A549 (cell line): ENCODE measurements at regions of chr7 and their contacts with region 1.

Region 1: GRCh38 chr7:100719523-100720319 is 547 bp upstream of the EPO start:
- DNase-seq: peak in 1 of 2 experiments; percentile 64
- ATAC-seq: peak; percentile 68 to 80
- H3K4me3 ChIP-seq: peak overlapping the region; percentile 40
- H3K27ac ChIP-seq: peak overlapping the region in 1 of 2 experiments; percentile 70; a peak in 1 of 6 replicates
- H3K4me1 ChIP-seq: peaks cover 11% of the 10 kb centered on the region; the same call in 2 of the 3 replicates
- CTCF ChIP-seq: peak; percentile 55
- EP300 ChIP-seq: no peak
- POLR2A ChIP-seq: no peak
- RAD21 ChIP-seq: peak; percentile 77 to 80

Region 2: GRCh38 chr7:100503345-100503725 is 216.4 kb before region 1 on chr7:
- CTCF ChIA-PET with region 1: no interaction called
- POLR2A ChIA-PET with region 1: no interaction called
- DNase-seq: peak in 1 of 2 experiments; percentile 61
- ATAC-seq: peak; percentile 67 to 82; a peak in 5 of 6 replicates
- H3K4me3 ChIP-seq: no peak overlapping the region
- H3K27ac ChIP-seq: peak overlapping the region; percentile 74 to 78
- H3K4me1 ChIP-seq: peaks cover 24% of the 10 kb centered on the region
- CTCF ChIP-seq: no peak
- EP300 ChIP-seq: peak in 1 of 2 experiments; percentile 10; a peak in 1 of 5 replicates
- POLR2A ChIP-seq: no peak
- RAD21 ChIP-seq: no peak

Region 3: DNA sequence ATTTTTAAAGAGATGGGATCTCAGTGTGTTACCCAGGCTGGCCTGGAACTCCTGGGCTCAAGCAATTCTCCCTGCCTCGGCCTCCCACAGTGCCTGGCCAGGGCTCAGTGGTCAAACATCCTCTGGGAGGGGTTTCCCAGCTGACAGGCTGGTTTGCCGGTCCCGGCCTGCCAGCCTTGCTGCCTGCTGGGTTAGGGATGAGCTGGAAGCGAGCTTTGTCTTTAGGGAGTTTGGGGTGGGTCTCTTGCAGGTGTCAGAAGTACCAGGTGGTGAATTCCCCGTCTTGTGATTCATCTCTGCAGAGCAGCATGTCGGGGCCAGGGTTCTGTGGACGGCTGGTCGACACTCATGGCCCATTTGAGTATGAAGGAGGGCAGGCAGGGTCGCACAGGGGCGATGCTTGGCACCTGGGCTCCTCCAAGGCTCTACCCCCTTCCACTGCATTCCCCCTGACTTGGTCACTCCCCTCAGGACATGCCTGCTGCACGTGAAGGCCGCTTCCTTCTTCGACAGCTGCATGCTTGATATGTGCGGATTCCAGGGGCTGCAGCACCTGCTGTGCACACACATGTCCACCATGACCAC is 43.9 kb after region 1 on chr7:
- CTCF ChIA-PET with region 1: interaction called, 11 read pairs
- POLR2A ChIA-PET with region 1: no interaction called
- DNase-seq: no peak
- ATAC-seq: no peak
- H3K4me3 ChIP-seq: no peak overlapping the region
- H3K27ac ChIP-seq: no peak overlapping the region
- H3K4me1 ChIP-seq: 0 out of 3 replicates have a peak, but pooled peaks cover 4% of the 10 kb centered on the region
- CTCF ChIP-seq: no peak
- EP300 ChIP-seq: no peak
- POLR2A ChIP-seq: no peak
- RAD21 ChIP-seq: no peak

Region 4: DNA sequence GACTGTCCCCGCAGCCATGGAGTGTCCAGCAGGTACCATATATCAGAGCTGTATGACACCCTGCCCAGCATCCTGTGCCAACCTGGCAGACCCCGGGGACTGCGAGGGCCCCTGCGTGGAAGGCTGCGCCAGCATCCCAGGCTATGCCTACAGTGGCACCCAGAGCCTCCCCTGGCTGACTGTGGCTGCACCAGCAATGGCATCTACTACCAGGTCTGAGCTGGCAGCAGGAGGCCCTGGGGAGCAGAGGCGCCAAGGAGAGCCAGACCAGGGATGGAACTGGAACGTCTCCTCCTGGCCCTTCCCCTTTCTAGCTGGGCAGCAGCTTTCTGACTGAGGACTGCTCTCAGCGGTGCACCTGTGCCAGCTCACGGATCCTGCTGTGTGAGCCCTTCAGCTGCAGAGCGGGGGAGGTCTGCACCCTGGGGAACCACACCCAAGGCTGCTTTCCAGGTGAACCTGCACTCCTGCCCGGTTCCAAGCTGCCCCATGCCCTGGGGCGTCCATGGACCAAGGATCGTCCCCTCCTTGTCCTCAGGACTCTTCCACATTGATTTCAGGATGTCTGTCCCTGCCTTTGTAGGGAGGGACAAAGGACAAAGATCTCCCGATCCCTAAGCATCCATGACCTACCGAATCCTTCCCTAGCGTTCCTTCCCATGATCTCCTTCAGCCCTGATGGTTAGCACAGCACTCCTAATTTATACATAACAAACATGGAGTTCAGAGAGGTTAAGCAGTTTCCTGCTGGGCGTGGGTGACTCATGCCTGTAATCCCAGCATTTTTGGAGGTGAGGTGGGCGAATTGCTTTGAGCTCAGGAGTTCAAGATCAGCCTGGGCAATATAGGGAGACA is 74.3 kb after region 1 on chr7:
- CTCF ChIA-PET with region 1: interaction called, 24 read pairs
- POLR2A ChIA-PET with region 1: no interaction called
- DNase-seq: no peak
- ATAC-seq: peak; percentile 26 to 31; a peak in 5 of 6 replicates
- H3K4me3 ChIP-seq: no peak overlapping the region
- H3K27ac ChIP-seq: peak overlapping the region in 1 of 2 experiments; percentile 60; a peak in 3 of 6 replicates
- H3K4me1 ChIP-seq: peaks cover 14% of the 10 kb centered on the region
- CTCF ChIP-seq: no peak
- EP300 ChIP-seq: no peak
- POLR2A ChIP-seq: no peak
- RAD21 ChIP-seq: no peak

Region 5: DNA sequence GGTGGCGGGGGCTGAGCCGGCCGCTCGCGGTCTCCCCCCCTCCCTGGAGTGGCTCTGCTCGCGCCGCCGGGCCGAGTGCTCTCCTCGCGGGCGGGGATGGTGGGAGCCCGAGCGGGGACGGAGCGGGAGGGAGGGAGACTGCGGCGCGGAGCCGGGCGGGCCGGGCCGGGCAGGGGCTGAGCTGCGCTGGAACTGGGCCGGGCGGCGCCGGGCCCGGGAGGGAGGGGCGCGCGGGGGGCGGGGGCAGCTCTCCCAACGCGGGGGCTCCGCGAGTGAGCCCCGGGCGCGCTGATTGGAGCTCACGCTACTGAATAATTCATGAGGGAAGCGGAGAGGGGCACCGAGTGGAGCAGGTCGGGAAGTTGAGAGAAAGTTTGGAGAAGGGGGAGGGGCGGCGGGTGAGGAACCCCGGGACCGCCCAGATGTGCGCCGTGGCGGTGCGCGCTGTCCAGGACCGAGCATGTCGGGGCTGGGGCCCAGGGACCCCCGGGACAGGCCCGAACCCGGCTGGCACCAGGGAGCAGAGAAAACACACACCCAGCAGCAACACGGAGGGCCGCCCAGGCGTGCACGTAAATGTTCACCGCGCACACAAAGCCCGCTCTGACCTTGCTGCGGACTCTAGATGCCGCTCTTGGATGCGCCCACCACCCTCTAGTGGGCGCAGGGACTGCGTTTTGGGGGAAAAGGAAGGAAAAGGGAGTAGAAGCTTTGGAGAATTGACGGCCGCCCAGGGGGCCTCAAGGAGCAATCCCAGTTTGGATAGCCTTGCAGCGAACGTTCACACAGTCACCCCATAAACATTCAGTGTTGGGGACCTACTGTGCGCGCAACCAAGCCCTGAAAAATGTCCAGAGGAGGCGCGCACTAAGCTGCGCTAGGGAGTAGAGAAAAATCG is 107.9 kb after region 1 on chr7 and contains the start of gene EPHB4:
- CTCF ChIA-PET with region 1: interaction called, 23 read pairs
- POLR2A ChIA-PET with region 1: no interaction called
- DNase-seq: peak; percentile 73 to 91
- ATAC-seq: peak; percentile 84 to 92
- H3K4me3 ChIP-seq: peak within 1 kb of the TSS; percentile 100
- H3K27ac ChIP-seq: peak within 1 kb of the TSS; percentile 99
- H3K4me1 ChIP-seq: peaks cover 30% of the 10 kb centered on the region; the same call in 2 of the 3 replicates
- CTCF ChIP-seq: peak; percentile 64
- EP300 ChIP-seq: no peak
- POLR2A ChIP-seq: peak; percentile 75
- RAD21 ChIP-seq: peak; percentile 41 to 51
- polyA plus RNA-seq, gene EPHB4: 37.8 and 40.5 TPM in 2 replicates